Head of caudate nucleus (tissue), 42 donors: ENCODE measurements at regions of chr17 and their contacts with region 1.

Region 1: DNA sequence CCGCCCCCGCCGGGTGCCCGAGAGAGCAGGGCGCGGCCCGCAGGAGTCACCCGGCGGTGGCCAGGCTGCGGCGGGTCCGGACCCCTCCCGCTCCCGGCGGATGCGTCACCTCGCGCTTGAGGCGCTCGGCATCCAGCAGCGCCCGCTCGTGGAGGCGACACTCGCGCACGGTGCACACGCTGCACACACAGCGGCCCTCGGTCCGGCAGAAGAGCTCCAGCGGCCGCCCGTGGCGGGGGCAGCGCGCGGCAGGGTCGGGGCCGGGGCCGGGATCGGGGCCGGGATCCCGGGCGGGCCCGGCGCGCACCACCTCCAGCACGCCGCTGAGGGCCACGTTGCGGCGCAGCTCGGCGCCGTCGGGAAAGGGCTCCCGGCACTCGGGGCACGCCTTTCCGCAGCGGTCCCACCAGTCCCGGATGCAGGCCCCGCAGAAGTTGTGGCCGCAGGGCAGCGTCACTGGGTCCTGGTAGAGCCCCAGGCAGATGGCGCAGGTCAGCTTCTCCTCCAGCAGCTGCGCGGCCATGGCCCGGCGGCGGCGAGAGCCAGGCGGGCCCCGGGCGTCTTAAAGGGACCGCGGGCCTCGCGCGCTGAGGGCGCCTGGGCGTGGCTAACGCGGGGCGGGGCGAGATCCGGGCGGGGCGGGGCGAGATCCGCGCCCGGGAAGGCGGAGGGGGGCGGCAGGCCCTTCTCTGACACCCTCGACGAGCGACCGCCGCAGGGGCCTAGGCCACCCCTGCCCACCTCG is at the start of gene TRIM65:
- DNase-seq: peak; percentile 63 to 94 (median 86)

Region 2: GRCh38 chr17:75771334-75772281 is 125.0 kb before region 1 on chr17:
- intact Hi-C with region 1: no loop called
- DNase-seq: peak in 8 of 42 donors; percentile 8 to 42 (median 19)

Region 3: DNA sequence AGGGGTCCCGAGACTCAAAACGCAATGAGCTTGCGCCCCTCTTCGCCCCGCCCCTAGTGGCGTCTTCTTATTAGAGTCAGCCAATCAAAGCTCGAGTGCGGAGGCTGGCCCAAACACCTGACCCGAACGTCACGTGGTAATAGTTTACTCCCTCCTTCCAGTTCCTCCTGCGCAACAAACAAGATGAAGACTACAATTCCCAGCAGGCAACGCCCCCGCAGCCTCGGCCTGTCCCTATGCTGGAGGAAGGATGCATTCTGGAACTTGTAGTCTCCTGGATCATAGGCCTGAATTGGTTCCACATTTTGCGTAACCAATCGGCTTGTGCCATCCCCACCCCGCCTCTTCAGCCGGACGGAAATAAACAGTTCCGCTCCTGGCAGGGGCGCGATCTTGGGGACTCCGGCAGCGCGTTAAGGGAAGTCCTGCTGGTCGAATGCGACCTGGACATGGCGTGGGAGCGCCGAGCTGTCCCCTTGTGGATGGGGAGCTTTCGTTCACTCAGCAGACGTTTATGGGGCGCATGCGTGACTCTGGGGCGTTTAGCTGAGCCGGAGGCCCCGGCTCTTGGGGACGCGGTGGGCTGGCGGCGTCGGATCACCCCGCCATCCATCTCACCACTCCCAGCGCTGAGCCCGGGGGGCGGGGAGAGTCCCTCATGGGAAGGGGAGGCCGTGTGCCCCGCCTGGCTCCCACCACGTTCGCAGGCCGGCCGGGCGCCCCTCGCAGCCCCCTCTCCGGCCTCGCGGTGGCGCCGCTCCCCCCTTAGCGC is 41.1 kb before region 1 on chr17 and contains the start of gene WBP2:
- intact Hi-C with region 1: loop called (anchors 5 kb)
- DNase-seq: peak; percentile 95 to 100 (median 99)